BJ (cell line): ENCODE measurements at regions of chr22 and their contacts with region 1.

Region 1: GRCh38 chr22:29028468-29028867 is 33.2 kb downstream of the C22orf31 start:
- DNase-seq: no peak
- H3K4me3 ChIP-seq: no peak overlapping the region
- H3K27me3 ChIP-seq: no peaks in the 10 kb centered on the region
- CTCF ChIP-seq: no peak

Region 2: DNA sequence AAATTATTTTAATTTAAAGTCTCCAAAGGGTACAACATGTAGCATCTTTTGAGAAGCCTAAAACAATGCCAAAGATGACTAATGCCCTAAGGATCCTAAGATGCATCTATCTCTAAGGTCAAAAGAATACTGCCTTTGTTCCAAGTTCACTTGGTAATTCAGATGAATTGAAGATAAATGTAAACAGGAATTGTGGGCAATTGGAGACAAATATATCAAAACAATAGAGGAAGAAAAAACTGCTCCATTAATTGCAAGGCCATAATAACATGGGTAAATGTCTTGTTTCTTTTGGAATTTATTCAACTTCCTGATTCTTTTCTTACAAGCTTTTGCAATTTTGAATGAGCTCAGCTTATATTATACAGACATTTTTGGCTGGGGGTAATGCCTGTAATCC is 687.5 kb before region 1 on chr22:
- CTCF ChIA-PET with region 1: no interaction called
- POLR2A ChIA-PET with region 1: no interaction called
- DNase-seq: no peak
- H3K4me3 ChIP-seq: no peak overlapping the region
- H3K27me3 ChIP-seq: no peaks in the 10 kb centered on the region
- CTCF ChIP-seq: no peak

Region 3: DNA sequence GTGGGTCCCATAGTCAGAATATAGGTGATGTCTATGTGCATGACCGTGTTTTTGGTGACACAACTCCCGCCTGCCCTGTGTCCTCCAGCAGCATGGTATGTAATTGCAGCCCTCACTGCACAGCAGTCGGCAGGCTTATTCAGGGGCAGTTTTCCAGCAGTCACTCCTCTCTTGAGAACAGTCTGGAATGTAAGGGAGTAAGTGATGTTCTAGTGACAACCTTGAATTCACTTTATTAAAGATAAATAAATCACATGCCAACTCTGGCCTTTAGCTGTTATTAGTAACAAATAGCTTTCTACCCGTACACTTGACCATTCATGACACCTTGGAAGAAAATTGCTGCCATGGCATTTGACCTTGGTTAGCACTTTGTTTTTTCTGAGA is 117.2 kb before region 1 on chr22:
- CTCF ChIA-PET with region 1: no interaction called
- POLR2A ChIA-PET with region 1: no interaction called
- DNase-seq: no peak
- H3K4me3 ChIP-seq: no peak overlapping the region
- H3K27me3 ChIP-seq: no peaks in the 10 kb centered on the region
- CTCF ChIP-seq: no peak

Region 4: GRCh38 chr22:29014773-29015172 is 13.7 kb before region 1 on chr22:
- CTCF ChIA-PET with region 1: interaction called, 11 read pairs
- POLR2A ChIA-PET with region 1: no interaction called
- DNase-seq: no peak
- H3K4me3 ChIP-seq: no peak overlapping the region
- H3K27me3 ChIP-seq: no peaks in the 10 kb centered on the region
- CTCF ChIP-seq: no peak